Right ventricle myocardium inferior (tissue), 1 donor: ENCODE measurements at regions of chr4 and their contacts with region 1.

Region 1: DNA sequence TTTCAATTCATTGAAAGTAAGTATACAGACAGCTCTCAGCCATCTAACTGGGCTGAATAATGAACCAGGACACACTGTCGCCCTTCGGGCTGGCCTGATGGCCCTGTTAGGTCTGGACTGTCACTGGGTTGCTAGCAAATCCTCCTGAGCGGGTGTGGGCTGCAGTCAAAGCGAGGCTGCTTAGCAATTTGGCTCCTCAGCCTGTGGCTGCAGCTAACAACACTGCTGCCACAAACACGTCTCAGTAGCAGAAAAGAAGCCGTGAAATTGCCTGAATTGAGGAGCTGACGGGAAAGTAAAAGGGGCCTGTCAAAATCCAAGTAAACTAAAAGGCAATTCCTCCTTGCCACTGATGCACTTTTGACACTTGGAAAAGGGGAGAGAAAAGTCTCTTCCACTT is 72.8 kb downstream of the SMIM20 start:
- DNase-seq: no peak
- ATAC-seq: no peak

Region 2: GRCh38 chr4:26022346-26023202 is 35.8 kb after region 1 on chr4:
- intact Hi-C with region 1: loop called (anchors 5 kb)
- DNase-seq: no peak
- ATAC-seq: peak; percentile 47